ENCODE measurements at regions of chr16 and their contacts with region 1.

Region 1: GRCh38 chr16:75647492-75648264 is at the starts of genes KARS1 and TERF2IP:
- DNase-seq: peak; percentile 96
- H3K4me3 Mint-ChIP-seq: peak within 1 kb of the TSS; percentile 99
- H3K27ac Mint-ChIP-seq: peak within 1 kb of the TSS; percentile 97
- H3K4me1 Mint-ChIP-seq: peaks cover 44% of the 10 kb centered on the region
- H3K27me3 Mint-ChIP-seq: no peaks in the 10 kb centered on the region
- CTCF ChIP-seq: no peak
- total RNA-seq, gene KARS1: 198 and 207 TPM in 2 replicates
- total RNA-seq, gene TERF2IP: 45.3 and 48.3 TPM in 2 replicates

Region 2: DNA sequence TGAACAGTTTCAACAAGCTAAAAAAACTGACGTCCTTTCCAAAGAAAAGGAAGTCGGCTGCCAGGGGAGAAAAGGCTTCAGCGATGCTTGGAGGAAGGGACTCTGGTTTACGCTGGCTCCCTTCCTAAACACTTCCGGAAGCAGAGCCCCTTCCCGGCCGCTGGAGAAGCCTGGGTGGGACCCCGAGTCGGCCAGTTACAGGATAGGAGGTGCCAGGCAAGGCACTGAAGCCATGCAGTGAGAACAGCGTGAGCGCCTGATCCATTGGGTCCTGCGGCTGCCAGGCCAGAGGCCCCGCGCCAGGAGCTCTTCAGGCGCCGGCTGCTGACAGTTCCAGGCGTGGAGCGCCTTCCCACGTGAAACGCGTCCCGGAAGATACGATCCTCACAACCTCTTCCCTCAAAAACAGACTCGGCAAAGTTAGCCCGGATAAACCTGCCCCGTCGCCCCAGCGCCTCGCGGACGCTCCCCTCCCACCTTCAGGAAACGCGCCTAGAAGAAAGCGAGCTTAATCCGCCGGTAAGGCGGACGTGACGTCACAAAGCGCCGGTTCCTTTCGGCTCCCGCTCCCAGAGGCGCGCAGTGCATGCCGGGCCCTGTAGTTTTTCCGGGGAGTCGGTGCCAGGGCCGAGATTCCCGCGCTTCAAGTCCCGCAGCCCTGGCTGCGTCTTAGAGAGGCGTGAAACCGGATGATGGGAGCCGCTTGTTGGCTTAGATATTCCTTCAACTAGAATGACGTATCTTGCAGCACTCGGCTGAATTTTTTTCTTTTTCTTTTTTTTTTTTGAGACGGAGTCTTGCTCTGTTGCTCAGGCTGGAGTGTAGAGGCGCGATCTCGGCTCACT is 24.7 kb before region 1 on chr16 and contains the start of gene ADAT1:
- CTCF ChIA-PET with region 1: interaction called, 5 read pairs
- intact Hi-C with region 1: loop called (anchors 2 kb)
- DNase-seq: peak; percentile 98
- H3K4me3 Mint-ChIP-seq: peak within 1 kb of the TSS; percentile 90
- H3K27ac Mint-ChIP-seq: peak within 1 kb of the TSS; percentile 92
- H3K4me1 Mint-ChIP-seq: peaks cover 16% of the 10 kb centered on the region
- H3K27me3 Mint-ChIP-seq: no peaks in the 10 kb centered on the region
- CTCF ChIP-seq: no peak
- total RNA-seq, gene ADAT1: 90.4 and 111 TPM in 2 replicates

Region 3: GRCh38 chr16:75868636-75869632 is 221.3 kb after region 1 on chr16:
- CTCF ChIA-PET with region 1: no interaction called
- intact Hi-C with region 1: no loop called
- DNase-seq: no peak
- H3K4me3 Mint-ChIP-seq: no peak overlapping the region
- H3K27ac Mint-ChIP-seq: no peak overlapping the region
- H3K4me1 Mint-ChIP-seq: no peaks in the 10 kb centered on the region
- H3K27me3 Mint-ChIP-seq: peaks cover 27% of the 10 kb centered on the region
- CTCF ChIP-seq: no peak